Endothelial cell of umbilical vein (primary cell): ENCODE measurements at regions of chr1 and their contacts with region 1.

Region 1: GRCh38 chr1:185349556-185349955 is 32.5 kb upstream of the IVNS1ABP start:
- DNase-seq: no peak
- H3K4me3 ChIP-seq: no peak overlapping the region
- H3K27ac ChIP-seq: no peak overlapping the region
- H3K4me1 ChIP-seq: no peaks in the 10 kb centered on the region
- H3K27me3 ChIP-seq: no peaks in the 10 kb centered on the region
- CTCF ChIP-seq: no peak
- POLR2A ChIP-seq: no peak

Region 2: DNA sequence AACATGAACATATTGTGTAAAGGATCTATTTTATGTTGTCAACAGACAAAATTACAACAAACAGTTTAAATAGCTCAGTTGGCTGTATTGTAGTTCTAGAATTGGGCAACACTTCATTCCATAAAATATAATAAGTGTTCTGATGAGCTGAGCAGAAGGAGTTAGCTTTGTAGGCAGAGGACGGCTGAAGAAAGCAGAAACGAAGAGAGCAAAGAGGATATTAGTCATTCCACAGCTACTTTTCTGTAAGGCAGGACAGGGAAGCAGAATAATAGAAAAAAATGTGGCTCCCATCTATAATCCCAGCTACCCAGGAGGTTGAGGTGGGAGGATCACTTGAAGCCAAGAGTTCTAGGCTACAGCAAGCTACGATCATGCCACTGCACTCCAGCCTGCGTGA is 12.3 kb before region 1 on chr1:
- CTCF ChIA-PET with region 1: interaction called, 10 read pairs
- POLR2A ChIA-PET with region 1: no interaction called
- dilution Hi-C with region 1: no loop called
- intact Hi-C with region 1: no loop called
- DNase-seq: no peak
- H3K4me3 ChIP-seq: no peak overlapping the region
- H3K27ac ChIP-seq: no peak overlapping the region
- H3K4me1 ChIP-seq: no peaks in the 10 kb centered on the region
- H3K27me3 ChIP-seq: no peaks in the 10 kb centered on the region
- CTCF ChIP-seq: no peak
- POLR2A ChIP-seq: no peak

Region 3: DNA sequence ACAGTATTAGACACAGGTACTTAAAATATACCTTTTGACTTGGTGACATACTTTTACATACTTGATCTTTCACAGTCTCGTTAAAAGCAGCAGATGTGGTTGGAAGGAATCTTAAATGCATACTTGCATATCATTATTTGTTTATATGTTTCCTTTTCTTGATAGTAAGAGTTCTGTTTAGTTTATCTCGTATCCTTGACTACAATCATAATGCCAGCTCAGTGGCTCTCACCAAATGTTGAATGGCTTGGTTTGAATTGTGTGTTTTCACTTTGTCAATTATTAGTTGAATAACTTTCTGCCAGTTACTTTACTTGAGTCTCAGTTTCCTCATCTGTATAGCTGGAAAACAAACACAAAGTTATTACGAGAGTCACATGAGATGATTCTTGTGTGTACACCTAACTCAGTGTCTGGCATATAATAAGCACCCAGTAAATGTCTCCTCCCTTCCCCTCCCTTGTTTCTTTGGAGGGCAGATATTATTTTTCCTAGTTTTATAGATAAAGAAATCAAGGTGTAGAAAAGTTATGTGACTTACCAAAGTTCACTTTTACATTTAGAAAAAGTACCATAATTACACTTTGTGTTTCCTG is 99.1 kb after region 1 on chr1:
- CTCF ChIA-PET with region 1: no interaction called
- POLR2A ChIA-PET with region 1: no interaction called
- dilution Hi-C with region 1: no loop called
- intact Hi-C with region 1: no loop called
- DNase-seq: no peak
- H3K4me3 ChIP-seq: no peak overlapping the region
- H3K27ac ChIP-seq: no peak overlapping the region
- H3K4me1 ChIP-seq: peaks cover 3% of the 10 kb centered on the region
- H3K27me3 ChIP-seq: no peaks in the 10 kb centered on the region
- CTCF ChIP-seq: no peak
- POLR2A ChIP-seq: no peak